Naive thymus-derived CD4-positive, alpha-beta T cell (primary cell): ENCODE measurements at regions of chr17 and their contacts with region 1.

Region 1: GRCh38 chr17:8997994-8998628 is 23.2 kb upstream of the NTN1 start:
- DNase-seq: peak; percentile 65 to 86 (median 76)
- ATAC-seq: peak; percentile 88
- H3K4me3 ChIP-seq: no peak overlapping the region
- H3K4me3 Mint-ChIP-seq: no peak overlapping the region
- H3K27ac ChIP-seq: no peak overlapping the region
- H3K27ac Mint-ChIP-seq: peak overlapping the region in 1 of 9 donors; percentile 52
- H3K4me1 ChIP-seq: peaks cover 0 to 6% of the 10 kb centered on the region in 2 donors
- H3K4me1 Mint-ChIP-seq: peaks cover 0 to 15% (median 8%) of the 10 kb centered on the region in 7 donors
- H3K27me3 ChIP-seq: peaks cover 0 to 5% of the 10 kb centered on the region in 2 donors
- H3K27me3 Mint-ChIP-seq: peaks cover 23 to 43% (median 30%) of the 10 kb centered on the region in 5 donors

Region 2: GRCh38 chr17:8409966-8410864 is 587.9 kb before region 1 on chr17:
- CTCF ChIA-PET with region 1: interaction called, 7 read pairs
- POLR2A ChIA-PET with region 1: no interaction called
- intact Hi-C with region 1: loop called in 1 of 2 experiments (anchors 5 kb)
- DNase-seq: peak; percentile 56 to 81 (median 70)
- ATAC-seq: peak; percentile 84
- H3K4me3 ChIP-seq: no peak overlapping the region
- H3K4me3 Mint-ChIP-seq: peak overlapping the region in 1 of 10 donors; percentile 48
- H3K27ac ChIP-seq: no peak overlapping the region
- H3K27ac Mint-ChIP-seq: no peak overlapping the region
- H3K4me1 ChIP-seq: peaks cover 0 to 3% of the 10 kb centered on the region in 2 donors
- H3K4me1 Mint-ChIP-seq: peaks cover 9 to 26% (median 15%) of the 10 kb centered on the region in 7 donors
- H3K27me3 ChIP-seq: no peaks in the 10 kb centered on the region
- H3K27me3 Mint-ChIP-seq: peaks cover 0 to 37% (median 8%) of the 10 kb centered on the region in 5 donors

Region 3: GRCh38 chr17:8745586-8746500 is 252.3 kb before region 1 on chr17:
- CTCF ChIA-PET with region 1: interaction called, 7 read pairs
- POLR2A ChIA-PET with region 1: no interaction called
- intact Hi-C with region 1: loop called in 1 of 2 experiments (anchors 2 kb)
- DNase-seq: peak; percentile 47 to 84 (median 70)
- ATAC-seq: peak; percentile 88
- H3K4me3 ChIP-seq: peak overlapping the region; percentile 80
- H3K4me3 Mint-ChIP-seq: peak overlapping the region; percentile 85 to 94 (median 91)
- H3K27ac ChIP-seq: peak overlapping the region; percentile 67
- H3K27ac Mint-ChIP-seq: peak overlapping the region; percentile 84 to 95 (median 88)
- H3K4me1 ChIP-seq: peaks cover 3 to 21% of the 10 kb centered on the region in 2 donors
- H3K4me1 Mint-ChIP-seq: peaks cover 2 to 34% (median 25%) of the 10 kb centered on the region in 7 donors
- H3K27me3 ChIP-seq: no peaks in the 10 kb centered on the region
- H3K27me3 Mint-ChIP-seq: peaks cover 0 to 21% (median 0%) of the 10 kb centered on the region in 5 donors

Region 4: DNA sequence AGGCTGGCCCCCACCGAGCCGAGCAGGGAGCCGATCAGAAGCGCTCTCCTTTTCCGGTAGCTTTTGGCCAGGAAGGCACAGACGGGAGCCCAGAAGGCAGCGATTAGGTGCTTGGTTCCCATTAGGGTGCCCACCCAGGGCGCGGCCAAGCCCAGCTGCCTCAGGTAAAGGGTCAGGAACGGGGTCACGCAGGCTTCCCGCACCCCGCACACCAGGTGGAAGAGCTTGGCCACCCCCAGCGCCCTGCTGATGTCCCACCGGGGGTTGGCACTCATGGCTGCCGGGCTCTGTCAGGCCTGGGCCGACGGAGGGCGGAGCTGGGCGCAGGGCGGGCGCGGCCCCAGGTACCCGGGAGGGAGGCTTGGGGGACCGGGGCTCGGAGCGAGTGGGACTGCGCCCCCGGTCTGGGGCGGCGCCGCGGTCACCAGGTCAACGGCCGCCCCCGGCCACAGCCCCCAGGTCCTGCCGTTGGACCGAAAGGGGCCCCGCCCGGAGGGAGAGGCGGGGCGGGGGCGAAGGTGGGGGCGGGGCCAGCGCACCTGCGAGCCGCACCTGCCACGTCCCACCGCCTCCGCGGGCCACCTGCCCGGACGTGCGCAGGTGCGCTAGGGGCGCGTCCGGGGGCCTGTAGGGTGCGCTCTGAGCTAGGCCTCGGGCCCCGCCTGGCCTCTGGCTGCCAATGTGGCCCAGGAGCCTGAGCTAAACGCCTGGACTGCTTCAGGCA is 199.1 kb before region 1 on chr17 and contains the start of gene MFSD6L:
- CTCF ChIA-PET with region 1: interaction called, 4 read pairs
- POLR2A ChIA-PET with region 1: no interaction called
- intact Hi-C with region 1: loop called in 1 of 2 experiments (anchors 1 kb)
- DNase-seq: no peak
- ATAC-seq: no peak
- H3K4me3 ChIP-seq: no peak within 1 kb of the TSS
- H3K4me3 Mint-ChIP-seq: no peak within 1 kb of the TSS
- H3K27ac ChIP-seq: no peak within 1 kb of the TSS
- H3K27ac Mint-ChIP-seq: peak within 1 kb of the TSS in 1 of 9 donors; percentile 25
- H3K4me1 ChIP-seq: no peaks in the 10 kb centered on the region
- H3K4me1 Mint-ChIP-seq: peaks cover 0 to 4% (median 0%) of the 10 kb centered on the region in 7 donors
- H3K27me3 ChIP-seq: no peaks in the 10 kb centered on the region
- H3K27me3 Mint-ChIP-seq: peaks cover 0 to 4% (median 0%) of the 10 kb centered on the region in 5 donors
- total RNA-seq, gene MFSD6L: 0.96 to 1.8 TPM in 2 of 5 experiments, not detected in the others

Region 5: DNA sequence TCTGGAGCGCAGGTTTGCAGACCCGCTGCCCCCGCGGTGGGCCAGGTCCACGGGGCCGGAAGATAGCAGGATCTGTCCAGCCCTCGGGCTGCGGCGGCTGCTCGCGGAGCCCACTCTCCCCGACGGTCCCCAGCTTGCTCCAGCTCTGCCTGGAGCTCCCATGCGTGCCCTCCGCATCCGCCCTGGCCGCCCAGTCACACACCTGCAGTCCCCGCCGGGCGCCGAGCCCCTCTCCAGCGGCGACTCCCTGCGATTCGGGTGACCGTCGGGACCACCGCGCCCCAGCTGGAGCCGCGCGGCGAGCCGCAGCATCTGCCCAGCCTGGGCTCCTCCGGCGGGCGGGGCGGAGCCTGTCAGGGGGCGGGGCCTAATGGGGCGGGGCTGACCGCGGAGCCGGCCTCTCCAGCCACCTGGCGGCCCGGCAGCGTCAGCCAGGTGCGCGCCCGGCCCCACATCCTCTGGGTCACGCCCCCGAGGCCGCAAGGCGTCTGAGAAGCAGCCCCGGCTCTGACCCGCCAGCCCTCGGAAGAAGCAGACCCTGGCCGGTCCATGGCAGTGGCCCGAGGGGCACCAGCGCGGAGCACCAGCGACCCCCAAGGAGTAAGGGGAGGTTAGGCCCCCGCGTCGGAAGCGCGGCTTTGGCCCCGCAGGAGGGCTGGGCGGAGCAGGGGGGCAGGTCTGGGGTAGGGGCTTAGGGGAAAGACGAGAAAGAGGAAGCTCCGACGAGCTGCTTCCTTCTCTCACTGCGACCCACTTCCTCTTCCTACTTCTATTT is 32.5 kb before region 1 on chr17 and contains the start of gene PIK3R5:
- CTCF ChIA-PET with region 1: interaction called, 7 read pairs
- POLR2A ChIA-PET with region 1: no interaction called
- intact Hi-C with region 1: loop called in 1 of 2 experiments (anchors 1 kb)
- DNase-seq: peak; percentile 71 to 82 (median 78)
- ATAC-seq: peak; percentile 89
- H3K4me3 ChIP-seq: peak within 1 kb of the TSS; percentile 81
- H3K4me3 Mint-ChIP-seq: peak within 1 kb of the TSS; percentile 86 to 100 (median 98)
- H3K27ac ChIP-seq: peak within 1 kb of the TSS; percentile 84
- H3K27ac Mint-ChIP-seq: peak within 1 kb of the TSS; percentile 80 to 98 (median 94)
- H3K4me1 ChIP-seq: peaks cover 34 to 35% of the 10 kb centered on the region in 2 donors
- H3K4me1 Mint-ChIP-seq: peaks cover 31 to 56% (median 46%) of the 10 kb centered on the region in 7 donors
- H3K27me3 ChIP-seq: no peaks in the 10 kb centered on the region
- H3K27me3 Mint-ChIP-seq: no peaks in the 10 kb centered on the region
- total RNA-seq, gene PIK3R5: 73.5 to 231 (median 77.6) TPM

Region 6: GRCh38 chr17:9529033-9529700 is 531.1 kb after region 1 on chr17:
- CTCF ChIA-PET with region 1: no interaction called
- POLR2A ChIA-PET with region 1: no interaction called
- intact Hi-C with region 1: loop called (anchors 5 kb)
- DNase-seq: peak in 1 of 9 donors; percentile 5
- ATAC-seq: peak; percentile 38
- H3K4me3 ChIP-seq: no peak overlapping the region
- H3K4me3 Mint-ChIP-seq: no peak overlapping the region
- H3K27ac ChIP-seq: no peak overlapping the region
- H3K27ac Mint-ChIP-seq: no peak overlapping the region
- H3K4me1 ChIP-seq: no peaks in the 10 kb centered on the region
- H3K4me1 Mint-ChIP-seq: peaks cover 0 to 3% (median 0%) of the 10 kb centered on the region in 7 donors
- H3K27me3 ChIP-seq: no peaks in the 10 kb centered on the region
- H3K27me3 Mint-ChIP-seq: no peaks in the 10 kb centered on the region